KBM-7 (cell line): ENCODE measurements at regions of chr5 and their contacts with region 1.

Region 1: GRCh38 chr5:78899922-78900362 is 85.2 kb downstream of the ARSB start:
- DNase-seq: peak; percentile 83

Region 2: DNA sequence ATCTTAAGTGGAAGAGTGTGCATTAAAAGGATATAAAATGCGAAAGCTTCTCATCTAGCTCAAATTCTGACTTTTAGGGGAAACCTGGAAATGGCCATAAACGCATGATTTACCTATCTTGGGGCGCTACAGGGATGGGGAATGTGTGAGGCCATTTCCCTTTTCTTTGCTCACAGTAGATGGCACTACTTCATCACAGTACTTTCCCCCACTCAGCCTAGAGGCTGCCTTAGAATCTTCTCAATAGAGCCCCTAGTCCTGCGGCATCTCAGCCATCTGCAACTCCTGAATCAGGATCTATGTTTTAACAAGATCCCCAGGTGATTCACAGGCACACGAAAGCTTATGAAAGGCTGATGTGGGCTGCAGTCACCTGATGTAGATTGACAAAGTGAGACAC is 362.1 kb before region 1 on chr5:
- in situ Hi-C with region 1: loop called (anchors 25 kb)
- DNase-seq: peak; percentile 53